Activated CD4-positive, alpha-beta memory T cell treated with anti-CD3 and anti-CD28 coated beads for 36 hours (primary cell): ENCODE measurements at regions of chr11 and their contacts with region 1.

Region 1: DNA sequence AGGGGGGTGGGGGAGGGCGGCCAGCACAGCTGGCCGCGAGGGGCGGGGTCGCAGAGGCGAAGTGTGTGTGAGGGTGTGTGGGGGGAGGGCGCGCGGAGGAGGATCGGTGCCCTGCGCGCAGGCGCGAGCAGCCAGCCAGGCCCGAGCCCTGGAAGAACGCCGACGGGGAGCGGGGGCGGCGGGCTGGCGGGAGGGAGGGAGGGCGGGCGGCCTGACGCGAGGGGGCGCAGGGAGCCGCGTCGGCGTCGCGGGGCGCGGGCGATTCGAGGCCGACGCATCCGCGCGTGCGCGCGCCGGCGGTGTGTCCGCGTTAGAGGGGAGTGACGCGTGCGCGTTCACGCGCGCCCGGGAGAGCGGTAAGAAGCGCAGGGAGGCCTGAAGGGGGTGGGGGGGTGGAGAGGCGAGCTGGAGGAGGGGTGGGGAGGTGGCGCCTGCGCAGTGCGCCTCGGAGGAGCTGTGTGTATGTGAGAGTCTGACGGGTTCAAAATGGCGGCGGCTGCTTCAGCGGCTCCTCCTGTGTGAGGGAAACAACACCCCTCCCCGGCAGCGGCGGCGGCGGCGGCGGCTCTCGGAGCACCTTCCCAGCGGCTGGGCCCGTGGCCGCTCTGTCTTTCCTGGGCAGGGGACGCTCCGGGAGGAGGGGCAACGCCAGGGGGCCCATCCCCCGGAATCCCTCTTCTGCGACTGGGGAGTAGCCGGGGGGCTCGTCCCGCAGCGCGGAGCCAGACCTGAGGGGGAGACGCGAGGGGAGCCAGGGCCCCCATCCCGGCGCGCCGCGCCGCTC is at the start of gene KDM2A:
- DNase-seq: peak; percentile 100
- H3K4me3 Mint-ChIP-seq: peak within 1 kb of the TSS; percentile 99
- H3K27ac Mint-ChIP-seq: peak within 1 kb of the TSS; percentile 93
- H3K4me1 Mint-ChIP-seq: peaks cover 21% of the 10 kb centered on the region
- H3K27me3 Mint-ChIP-seq: no peaks in the 10 kb centered on the region
- total RNA-seq, gene KDM2A: 65.1 to 69.6 TPM

Region 2: GRCh38 chr11:66815646-66816045 is 303.3 kb before region 1 on chr11:
- CTCF ChIA-PET with region 1: no interaction called
- POLR2A ChIA-PET with region 1: no interaction called
- intact Hi-C with region 1: no loop called
- DNase-seq: no peak
- H3K4me3 Mint-ChIP-seq: no peak overlapping the region
- H3K27ac Mint-ChIP-seq: no peak overlapping the region
- H3K4me1 Mint-ChIP-seq: peaks cover 7% of the 10 kb centered on the region
- H3K27me3 Mint-ChIP-seq: no peaks in the 10 kb centered on the region

Region 3: DNA sequence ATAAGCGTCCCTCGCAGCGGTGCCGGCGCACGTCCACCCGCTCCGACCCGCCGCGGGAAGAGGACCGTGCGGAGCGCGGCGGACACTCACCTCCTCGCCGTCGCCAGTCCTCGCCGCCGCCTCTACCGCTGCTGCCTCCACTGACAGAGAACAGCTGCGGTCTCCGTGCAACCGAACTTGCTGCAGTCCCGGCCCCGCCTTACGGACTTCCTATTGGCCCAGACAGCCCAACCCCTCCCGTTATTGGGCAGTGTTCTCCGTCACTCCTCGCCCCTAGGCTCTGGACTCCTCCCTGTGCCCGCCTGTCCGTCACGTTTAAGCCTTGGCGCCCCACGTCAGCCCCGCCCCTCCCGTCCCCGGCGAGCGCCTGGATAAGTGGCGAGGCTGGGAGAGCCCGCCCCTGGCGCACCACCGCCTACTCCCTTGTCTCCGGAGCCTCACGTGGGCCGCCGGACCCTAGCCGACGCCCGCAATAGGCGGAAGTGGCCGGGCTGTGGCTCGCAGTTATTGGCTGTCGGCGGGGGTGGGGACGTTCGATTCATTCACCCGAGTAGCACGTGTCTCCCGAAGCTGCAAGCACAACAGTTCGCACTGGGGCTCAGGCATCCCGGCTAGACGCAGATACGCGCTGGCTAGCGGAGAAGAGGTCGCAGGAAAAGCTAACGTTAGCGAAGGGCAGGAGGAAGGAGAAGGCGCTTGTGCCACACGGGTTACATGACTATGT is 160.6 kb before region 1 on chr11 and contains the start of gene PC:
- CTCF ChIA-PET with region 1: no interaction called
- POLR2A ChIA-PET with region 1: interaction called, 3 read pairs
- intact Hi-C with region 1: loop called (anchors 1 kb)
- DNase-seq: peak; percentile 99
- H3K4me3 Mint-ChIP-seq: peak within 1 kb of the TSS; percentile 76
- H3K27ac Mint-ChIP-seq: peak within 1 kb of the TSS; percentile 71
- H3K4me1 Mint-ChIP-seq: peaks cover 18% of the 10 kb centered on the region
- H3K27me3 Mint-ChIP-seq: no peaks in the 10 kb centered on the region
- total RNA-seq, gene PC: 13.1 to 15.3 TPM

Region 4: GRCh38 chr11:67160874-67161783 is 42.1 kb after region 1 on chr11:
- CTCF ChIA-PET with region 1: no interaction called
- POLR2A ChIA-PET with region 1: no interaction called
- intact Hi-C with region 1: loop called (anchors 5 kb)
- DNase-seq: no peak
- H3K4me3 Mint-ChIP-seq: no peak overlapping the region
- H3K27ac Mint-ChIP-seq: peak overlapping the region; percentile 57
- H3K4me1 Mint-ChIP-seq: peaks cover 47% of the 10 kb centered on the region
- H3K27me3 Mint-ChIP-seq: no peaks in the 10 kb centered on the region